GM12878 (cell line): ENCODE measurements at regions of chr3 and their contacts with region 1.

Region 1: DNA sequence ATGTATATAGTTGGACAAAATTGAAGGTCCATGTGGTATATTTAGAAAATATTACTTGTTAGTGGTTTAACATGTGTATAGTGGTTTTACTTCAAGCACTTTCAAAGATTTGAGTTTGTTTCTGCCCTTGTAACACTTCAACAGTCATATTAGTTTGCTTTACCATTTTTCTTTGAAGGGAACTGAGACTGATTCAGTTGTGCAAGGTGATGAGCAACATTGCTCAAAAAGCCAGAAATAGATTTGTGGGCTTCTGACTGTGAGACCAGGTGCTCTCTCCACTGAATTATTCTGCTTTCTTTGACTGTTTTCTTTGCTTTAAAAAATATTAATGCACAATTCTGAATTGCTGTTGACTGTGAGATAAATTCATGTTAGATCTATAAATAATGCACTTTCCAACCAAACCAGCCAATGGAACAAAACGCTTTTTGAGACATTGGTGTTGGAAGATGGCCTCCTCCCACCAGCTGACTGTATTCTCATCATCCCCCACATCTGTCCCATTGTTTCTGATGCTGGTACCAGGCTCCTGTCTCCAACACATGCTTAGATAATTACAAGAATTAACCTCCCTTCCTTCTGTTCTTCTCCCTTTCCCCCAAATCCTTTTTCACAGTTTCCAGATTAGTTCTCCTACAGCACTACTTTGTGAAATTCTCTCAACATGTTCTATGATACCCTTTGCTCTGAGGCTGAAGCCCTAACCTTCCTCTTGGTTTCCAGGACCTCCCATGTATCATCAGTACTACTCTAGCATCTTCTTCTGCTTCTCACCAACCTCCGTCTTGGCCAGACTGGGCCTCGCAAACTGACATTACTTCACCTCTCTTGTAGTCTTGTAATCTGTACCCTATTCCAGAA is 27.9 kb downstream of the PLCL2 start:
- DNase-seq: peak; percentile 90
- ATAC-seq: peak; percentile 92
- H3K4me3 ChIP-seq: peak overlapping the region; percentile 27
- H3K27ac ChIP-seq: peak overlapping the region; percentile 99
- H3K4me1 ChIP-seq: peaks cover 49% of the 10 kb centered on the region
- H3K27me3 ChIP-seq: no peaks in the 10 kb centered on the region
- CTCF ChIP-seq: no peak
- EP300 ChIP-seq: peak; percentile 91 to 96
- POLR2A ChIP-seq: no peak
- RAD21 ChIP-seq: no peak

Region 2: DNA sequence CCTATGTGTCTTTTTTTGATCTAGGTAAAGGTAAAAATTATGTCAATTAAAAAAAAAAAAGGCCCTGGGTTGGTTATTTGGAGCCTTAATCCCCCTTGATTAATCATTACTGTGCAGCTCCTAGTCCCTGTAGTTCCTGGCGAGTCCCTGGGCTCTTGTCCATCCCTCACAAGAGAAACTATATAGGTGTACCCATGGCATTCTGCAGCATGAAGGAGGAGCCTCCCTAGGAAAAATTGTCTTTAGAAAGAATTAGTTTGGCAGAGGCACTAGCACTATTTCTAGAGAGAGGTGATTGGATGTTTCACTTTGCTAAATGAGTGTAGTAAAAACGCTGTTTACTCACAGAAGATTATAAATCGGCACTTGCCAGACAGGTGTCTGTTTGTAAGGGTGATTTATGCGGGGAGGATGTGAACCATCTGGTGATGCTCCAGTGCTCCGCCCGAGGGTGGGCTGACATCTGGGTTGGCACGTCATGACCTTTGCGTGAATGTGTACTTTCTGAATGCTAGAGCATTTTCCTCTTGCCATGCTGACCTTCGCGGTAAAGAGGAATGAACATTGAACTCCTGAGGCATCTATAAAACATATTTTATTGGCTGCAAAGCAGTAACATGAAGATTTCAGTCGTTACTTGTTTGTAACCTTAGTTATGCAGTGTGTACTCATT is 15.2 kb before region 1 on chr3:
- CTCF ChIA-PET with region 1: interaction called, 9 read pairs
- POLR2A ChIA-PET with region 1: interaction called, 4 read pairs
- RAD21 ChIA-PET with region 1: interaction called, 8 read pairs
- SMC1A ChIA-PET with region 1: interaction called, 91 read pairs
- in situ Hi-C with region 1: no loop called
- intact Hi-C with region 1: no loop called
- DNase-seq: peak; percentile 52
- ATAC-seq: peak; percentile 79
- H3K4me3 ChIP-seq: peak overlapping the region; percentile 47; the same call in 1 of the 2 replicates
- H3K27ac ChIP-seq: peak overlapping the region; percentile 79
- H3K4me1 ChIP-seq: peaks cover 26% of the 10 kb centered on the region
- H3K27me3 ChIP-seq: no peaks in the 10 kb centered on the region
- CTCF ChIP-seq: no peak
- EP300 ChIP-seq: peak in 1 of 2 experiments; percentile 47; a peak in 1 of 4 replicates
- POLR2A ChIP-seq: no peak
- RAD21 ChIP-seq: no peak

Region 3: DNA sequence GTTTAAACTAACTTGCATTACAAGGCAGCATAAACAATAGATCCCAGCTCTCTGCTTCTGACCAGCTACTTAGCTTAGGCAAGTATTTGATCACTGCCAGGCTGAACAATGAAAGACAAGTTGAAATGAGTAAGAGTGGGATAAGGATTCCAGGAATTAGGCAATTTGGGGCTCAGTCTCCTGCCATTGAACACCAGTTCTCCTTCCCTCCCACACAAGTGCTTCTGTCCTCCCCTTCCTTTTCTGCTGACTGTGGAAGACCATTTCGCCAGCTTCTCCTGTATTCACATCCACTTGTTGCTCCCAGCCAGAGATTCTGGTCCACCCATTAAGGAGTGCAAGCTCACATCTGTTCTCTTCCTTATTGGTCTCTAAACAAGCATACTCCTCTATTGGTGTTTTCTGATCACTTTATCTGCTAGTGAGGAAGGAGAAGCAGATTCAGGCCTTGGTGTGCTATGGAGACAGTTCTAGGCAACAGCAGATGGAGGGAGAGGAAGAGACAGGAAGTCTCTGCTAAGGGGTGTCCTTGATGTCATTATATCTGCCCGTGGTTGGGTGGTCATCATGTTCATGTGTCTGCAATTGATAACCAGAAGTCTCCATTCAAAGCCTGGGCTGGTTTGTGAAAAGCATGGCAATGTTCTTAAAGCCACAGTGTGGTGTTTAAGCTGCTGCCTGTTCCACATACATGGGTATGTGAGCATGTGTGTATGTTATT is 93.7 kb after region 1 on chr3:
- CTCF ChIA-PET with region 1: no interaction called
- POLR2A ChIA-PET with region 1: no interaction called
- RAD21 ChIA-PET with region 1: no interaction called
- SMC1A ChIA-PET with region 1: no interaction called
- in situ Hi-C with region 1: no loop called
- intact Hi-C with region 1: loop called (anchors 5 kb)
- DNase-seq: no peak
- ATAC-seq: peak; percentile 72
- H3K4me3 ChIP-seq: no peak overlapping the region
- H3K27ac ChIP-seq: no peak overlapping the region
- H3K4me1 ChIP-seq: peaks cover 9% of the 10 kb centered on the region; the same call in 1 of the 2 replicates
- H3K27me3 ChIP-seq: no peaks in the 10 kb centered on the region
- CTCF ChIP-seq: no peak
- EP300 ChIP-seq: no peak
- POLR2A ChIP-seq: no peak
- RAD21 ChIP-seq: no peak